ENCODE measurements at regions of chr5 and their contacts with region 1.

Region 1: DNA sequence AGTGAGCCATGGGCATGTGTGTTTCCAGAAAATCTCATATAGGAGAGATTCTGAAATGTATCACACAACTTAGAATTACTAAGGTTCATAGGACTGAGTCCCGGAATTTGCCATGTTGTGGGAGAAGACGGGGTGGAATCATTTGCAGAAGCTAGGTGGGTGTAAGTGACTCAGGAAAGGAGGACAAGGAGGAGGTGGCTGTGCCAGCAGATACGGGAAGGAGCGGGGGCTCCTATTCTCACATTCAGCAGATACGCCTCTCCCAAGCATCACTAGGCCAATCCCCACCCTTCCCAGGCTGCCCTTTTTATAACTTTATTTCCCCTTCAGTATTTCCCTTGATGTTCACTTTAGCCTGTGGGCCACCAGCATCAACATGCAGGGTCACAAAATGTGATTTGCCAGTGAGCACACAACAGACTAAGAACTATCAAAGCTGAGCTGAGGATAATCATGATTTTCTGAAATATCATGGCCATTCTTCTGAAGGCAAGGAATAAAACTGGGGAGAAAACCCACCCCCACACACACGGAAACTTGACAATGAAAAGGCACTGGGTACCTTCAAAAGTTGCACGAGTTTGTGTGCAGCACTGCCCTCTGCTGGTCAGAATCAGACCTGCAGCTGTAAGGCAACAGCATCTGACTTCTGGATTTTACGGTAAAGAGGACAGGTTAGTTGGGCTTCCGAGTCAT is 133.2 kb downstream of the MTX3 start:
- DNase-seq: peak; percentile 78 to 80
- H3K4me3 ChIP-seq: no peak overlapping the region
- H3K27ac ChIP-seq: no peak overlapping the region
- H3K4me1 ChIP-seq: no peaks in the 10 kb centered on the region
- H3K27me3 ChIP-seq: no peaks in the 10 kb centered on the region
- CTCF ChIP-seq: peak; percentile 82 to 91 (median 89)
- POLR2A ChIP-seq: no peak

Region 2: GRCh38 chr5:79612667-79613198 is 245.1 kb before region 1 on chr5:
- intact Hi-C with region 1: loop called (anchors 10 kb)
- DNase-seq: no peak
- H3K4me3 ChIP-seq: peak overlapping the region; percentile 69 to 75
- H3K27ac ChIP-seq: peak overlapping the region; percentile 84 to 92
- H3K4me1 ChIP-seq: peaks cover 5% of the 10 kb centered on the region in 2 donors
- H3K27me3 ChIP-seq: no peaks in the 10 kb centered on the region
- CTCF ChIP-seq: no peak
- POLR2A ChIP-seq: no peak

Region 3: DNA sequence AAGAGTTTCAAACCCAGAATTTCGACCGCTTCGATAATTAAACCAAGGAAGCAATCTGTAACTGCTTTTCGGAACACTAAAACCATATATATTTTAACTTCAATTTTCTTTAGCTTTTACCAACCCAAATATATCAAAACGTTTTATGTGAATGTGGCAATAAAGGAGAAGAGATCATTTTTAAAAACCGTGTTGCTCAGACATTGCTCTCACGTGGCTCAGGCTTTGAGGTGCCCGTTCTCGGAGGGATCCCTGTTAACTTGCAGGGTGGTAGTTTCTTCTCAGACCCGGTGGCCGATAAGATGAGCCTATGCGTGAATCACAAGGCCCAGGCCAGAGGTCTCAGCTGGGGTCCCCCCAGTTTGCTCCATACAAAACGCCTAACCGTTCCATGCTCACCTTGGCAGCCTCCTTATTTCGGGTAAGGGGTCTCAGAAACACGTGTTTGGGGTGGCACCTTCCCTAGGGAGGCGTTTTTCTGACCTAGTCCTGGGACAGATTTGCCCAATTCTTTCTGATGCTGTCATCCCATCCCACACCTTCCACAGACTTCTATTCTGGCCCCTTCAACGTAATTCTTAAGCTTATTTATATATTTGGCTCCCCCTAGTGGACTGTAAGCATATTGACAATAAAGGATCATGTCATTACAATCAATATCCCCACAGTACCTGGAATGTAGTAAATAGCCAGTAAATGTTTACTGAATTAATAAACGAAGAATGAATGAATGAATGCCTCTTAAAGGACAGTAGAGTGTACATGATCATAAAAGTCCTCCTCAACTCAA is 225.4 kb after region 1 on chr5:
- intact Hi-C with region 1: loop called (anchors 10 kb)
- DNase-seq: peak; percentile 50 to 53
- H3K4me3 ChIP-seq: peak overlapping the region; percentile 24 to 27
- H3K27ac ChIP-seq: peak overlapping the region; percentile 86 to 90
- H3K4me1 ChIP-seq: no peaks in the 10 kb centered on the region
- H3K27me3 ChIP-seq: no peaks in the 10 kb centered on the region
- CTCF ChIP-seq: peak; percentile 72 to 81 (median 76)
- POLR2A ChIP-seq: no peak

Measured in uterus (tissue), 4 donors.